ENCODE measurements at regions of chr5 and their contacts with region 1.

Region 1: GRCh38 chr5:173859428-173860159 is 28.6 kb upstream of the CPEB4 start:
- DNase-seq: no peak
- H3K4me3 ChIP-seq: no peak overlapping the region
- CTCF ChIP-seq: no peak

Region 2: GRCh38 chr5:173789031-173789920 is 70.3 kb before region 1 on chr5:
- in situ Hi-C with region 1: loop called (anchors 5 kb)
- DNase-seq: peak; percentile 65
- H3K4me3 ChIP-seq: no peak overlapping the region
- CTCF ChIP-seq: no peak